Common myeloid progenitor, CD34-positive (primary cell): ENCODE measurements at regions of chr3 and their contacts with region 1.

Region 1: GRCh38 chr3:52339612-52340011 is 23.5 kb downstream of the DNAH1 start:
- DNase-seq: peak; percentile 89 to 93 (median 89)
- H3K4me3 ChIP-seq: no peak overlapping the region
- H3K27ac ChIP-seq: no peak overlapping the region
- H3K4me1 ChIP-seq: no peaks in the 10 kb centered on the region
- H3K27me3 ChIP-seq: no peaks in the 10 kb centered on the region

Region 2: GRCh38 chr3:52231502-52232293 is 107.9 kb before region 1 on chr3:
- CTCF ChIA-PET with region 1: interaction called, 122 read pairs
- POLR2A ChIA-PET with region 1: interaction called, 3 read pairs
- DNase-seq: peak; percentile 77 to 87 (median 80)
- H3K4me3 ChIP-seq: peak overlapping the region in 1 of 7 experiments; percentile 8
- H3K27ac ChIP-seq: no peak overlapping the region
- H3K4me1 ChIP-seq: peaks cover 0 to 19% (median 13%) of the 10 kb centered on the region in 4 experiments
- H3K27me3 ChIP-seq: no peaks in the 10 kb centered on the region

Region 3: GRCh38 chr3:52308308-52308707 is 31.3 kb before region 1 on chr3:
- CTCF ChIA-PET with region 1: interaction called, 10 read pairs
- POLR2A ChIA-PET with region 1: interaction called, 3 read pairs
- DNase-seq: no peak
- H3K4me3 ChIP-seq: no peak overlapping the region
- H3K27ac ChIP-seq: no peak overlapping the region
- H3K4me1 ChIP-seq: peaks cover 0 to 15% (median 12%) of the 10 kb centered on the region in 4 experiments
- H3K27me3 ChIP-seq: no peaks in the 10 kb centered on the region

Region 4: GRCh38 chr3:52328536-52329080 is 11.0 kb before region 1 on chr3:
- CTCF ChIA-PET with region 1: interaction called, 15 read pairs
- POLR2A ChIA-PET with region 1: no interaction called
- DNase-seq: no peak
- H3K4me3 ChIP-seq: no peak overlapping the region
- H3K27ac ChIP-seq: no peak overlapping the region
- H3K4me1 ChIP-seq: no peaks in the 10 kb centered on the region
- H3K27me3 ChIP-seq: no peaks in the 10 kb centered on the region